ENCODE measurements at regions of chr22 and their contacts with region 1.

Region 1: DNA sequence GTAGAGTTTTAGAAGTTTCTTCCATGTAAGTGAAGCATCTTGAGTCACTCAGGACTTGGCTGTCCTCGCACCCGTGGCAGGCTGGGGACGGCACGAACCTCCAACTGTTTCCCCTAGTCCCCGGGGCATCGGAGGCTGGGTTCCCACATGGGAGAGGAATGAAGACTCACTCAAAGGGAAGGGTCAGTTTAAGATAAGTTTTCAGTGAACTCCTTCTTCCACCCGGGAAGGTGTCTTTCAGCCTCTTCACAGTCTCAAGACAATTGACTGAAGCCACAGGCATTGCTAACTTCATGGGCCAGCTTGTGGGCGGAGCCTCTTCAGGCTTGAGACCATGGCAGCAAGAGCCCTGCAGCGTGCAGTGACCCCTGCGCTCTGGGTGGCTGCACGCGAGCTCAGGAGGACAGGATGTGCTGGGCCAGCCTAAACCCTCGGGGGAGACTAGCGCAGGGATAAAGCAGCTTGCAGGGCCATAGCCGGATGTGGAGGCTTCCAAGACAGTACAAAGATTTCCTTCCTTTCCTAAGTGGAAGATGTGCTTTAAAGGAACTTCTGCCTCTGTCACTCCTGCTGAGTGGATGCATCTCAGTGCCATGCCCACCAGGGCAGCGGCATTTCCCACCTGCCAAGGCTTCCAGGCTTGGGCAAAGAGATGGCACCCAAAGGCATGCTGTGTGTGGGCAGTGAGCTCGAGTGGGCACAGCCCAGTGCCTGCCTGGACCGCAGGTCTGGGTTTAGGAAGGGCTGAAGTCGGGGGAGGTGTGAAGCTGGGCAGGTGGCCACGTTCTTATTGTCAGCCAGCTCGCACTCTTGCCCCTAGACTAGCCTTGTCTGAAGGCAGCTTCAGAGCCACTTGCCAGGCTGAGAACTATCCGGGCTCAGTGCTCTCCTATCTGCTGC is 32.9 kb downstream of the PPIL2 start:
- DNase-seq: no peak
- H3K4me3 ChIP-seq: no peak overlapping the region
- H3K27ac ChIP-seq: no peak overlapping the region
- H3K4me1 ChIP-seq: no peaks in the 10 kb centered on the region
- H3K27me3 ChIP-seq: no peaks in the 10 kb centered on the region
- CTCF ChIP-seq: no peak

Region 2: DNA sequence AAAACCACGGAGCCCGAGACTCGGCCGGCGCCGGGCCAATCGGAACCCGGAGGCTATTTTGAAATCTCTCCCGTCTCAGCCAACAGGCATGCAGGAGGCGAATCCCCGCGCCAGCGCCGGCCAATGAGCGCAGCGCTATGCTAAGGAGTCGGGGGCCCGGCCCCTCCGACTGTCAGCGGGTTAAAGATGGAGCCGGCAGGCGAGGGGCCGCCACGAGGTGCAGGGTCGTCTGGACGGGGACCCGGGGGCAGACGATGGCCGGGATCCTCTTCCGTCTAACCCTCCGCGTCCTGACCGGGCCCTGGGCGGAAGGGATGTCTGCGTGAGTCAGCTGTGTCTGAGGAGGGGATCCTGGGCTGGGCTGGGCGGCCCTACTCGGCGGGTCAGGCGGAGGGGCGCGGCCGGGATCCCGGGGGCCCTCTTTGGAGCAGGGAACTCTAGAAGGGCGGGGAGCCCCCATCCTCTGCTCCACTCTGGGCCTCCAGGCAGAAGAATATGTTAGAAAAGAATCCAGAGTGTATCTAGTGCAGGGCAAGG is 46.6 kb before region 1 on chr22:
- CTCF ChIA-PET with region 1: no interaction called
- dilution Hi-C with region 1: loop called (anchors 5 kb)
- in situ Hi-C with region 1: no loop called
- intact Hi-C with region 1: no loop called
- DNase-seq: peak; percentile 85
- H3K4me3 ChIP-seq: peak overlapping the region; percentile 77 to 97 (median 89)
- H3K27ac ChIP-seq: peak overlapping the region; percentile 32
- H3K4me1 ChIP-seq: peaks cover 14% of the 10 kb centered on the region
- H3K27me3 ChIP-seq: no peaks in the 10 kb centered on the region
- CTCF ChIP-seq: no peak

Region 3: GRCh38 chr22:21778705-21779363 is 80.2 kb after region 1 on chr22:
- CTCF ChIA-PET with region 1: no interaction called
- dilution Hi-C with region 1: loop called (anchors 5 kb)
- in situ Hi-C with region 1: no loop called
- intact Hi-C with region 1: no loop called
- DNase-seq: peak; percentile 14
- H3K4me3 ChIP-seq: no peak overlapping the region
- H3K27ac ChIP-seq: no peak overlapping the region
- H3K4me1 ChIP-seq: no peaks in the 10 kb centered on the region
- H3K27me3 ChIP-seq: no peaks in the 10 kb centered on the region
- CTCF ChIP-seq: no peak

Region 4: GRCh38 chr22:21802056-21802455 is 103.4 kb after region 1 on chr22:
- CTCF ChIA-PET with region 1: no interaction called
- dilution Hi-C with region 1: loop called (anchors 5 kb)
- in situ Hi-C with region 1: no loop called
- intact Hi-C with region 1: no loop called
- DNase-seq: peak; percentile 5
- H3K4me3 ChIP-seq: no peak overlapping the region
- H3K27ac ChIP-seq: no peak overlapping the region
- H3K4me1 ChIP-seq: no peaks in the 10 kb centered on the region
- H3K27me3 ChIP-seq: no peaks in the 10 kb centered on the region
- CTCF ChIP-seq: no peak